ENCODE measurements at regions of chr3 and their contacts with region 1.

Region 1: GRCh38 chr3:36957862-36958686 is 13.2 kb upstream of the TRANK1 start:
- DNase-seq: no peak
- H3K4me3 ChIP-seq: peak overlapping the region; percentile 30
- H3K27ac ChIP-seq: no peak overlapping the region
- H3K4me1 ChIP-seq: peaks cover 14% of the 10 kb centered on the region
- CTCF ChIP-seq: no peak

Region 2: DNA sequence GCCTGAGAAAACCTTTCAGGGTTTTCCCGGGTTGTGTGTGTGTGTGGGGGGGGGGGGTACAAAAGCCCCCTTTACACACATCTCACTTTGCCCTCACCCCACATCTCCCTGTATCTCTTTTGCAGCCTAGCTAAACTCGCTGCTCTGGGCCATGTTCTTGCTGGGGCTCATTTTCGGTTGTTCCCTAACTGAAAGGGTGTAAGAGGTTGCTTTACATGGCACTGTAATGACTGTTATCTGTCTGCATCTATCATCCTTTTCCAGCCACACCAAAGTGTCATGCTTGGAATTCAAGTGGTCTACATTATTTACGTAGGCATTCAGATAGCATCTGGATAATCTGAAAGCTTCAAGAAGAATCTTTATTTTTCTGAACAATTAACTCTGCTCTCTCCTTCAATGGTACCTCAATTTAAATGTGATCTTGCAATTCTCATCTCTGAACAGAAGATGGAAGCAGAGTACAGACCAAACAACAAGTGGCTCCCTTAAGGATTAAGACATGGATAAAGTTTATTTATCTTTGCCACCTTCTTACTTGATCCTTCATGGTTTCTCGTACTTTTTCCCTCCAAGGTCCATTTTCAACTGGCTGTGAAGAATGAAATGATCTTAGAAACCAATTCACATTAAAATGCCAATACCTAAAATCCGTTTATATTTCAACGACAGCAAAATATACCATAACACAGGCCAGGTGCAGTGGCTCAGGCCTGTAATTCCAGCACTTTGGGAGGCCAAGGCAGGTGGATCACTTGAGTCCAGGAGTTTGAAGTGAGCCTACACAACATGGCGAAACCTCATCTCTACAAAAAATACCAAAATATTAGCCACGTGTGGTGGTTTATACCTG is 228.6 kb before region 1 on chr3:
- CTCF ChIA-PET with region 1: no interaction called
- POLR2A ChIA-PET with region 1: no interaction called
- intact Hi-C with region 1: loop called (anchors 2 kb)
- DNase-seq: peak; percentile 55
- H3K4me3 ChIP-seq: no peak overlapping the region
- H3K27ac ChIP-seq: no peak overlapping the region
- H3K4me1 ChIP-seq: no peaks in the 10 kb centered on the region
- CTCF ChIP-seq: peak; percentile 92

Region 3: DNA sequence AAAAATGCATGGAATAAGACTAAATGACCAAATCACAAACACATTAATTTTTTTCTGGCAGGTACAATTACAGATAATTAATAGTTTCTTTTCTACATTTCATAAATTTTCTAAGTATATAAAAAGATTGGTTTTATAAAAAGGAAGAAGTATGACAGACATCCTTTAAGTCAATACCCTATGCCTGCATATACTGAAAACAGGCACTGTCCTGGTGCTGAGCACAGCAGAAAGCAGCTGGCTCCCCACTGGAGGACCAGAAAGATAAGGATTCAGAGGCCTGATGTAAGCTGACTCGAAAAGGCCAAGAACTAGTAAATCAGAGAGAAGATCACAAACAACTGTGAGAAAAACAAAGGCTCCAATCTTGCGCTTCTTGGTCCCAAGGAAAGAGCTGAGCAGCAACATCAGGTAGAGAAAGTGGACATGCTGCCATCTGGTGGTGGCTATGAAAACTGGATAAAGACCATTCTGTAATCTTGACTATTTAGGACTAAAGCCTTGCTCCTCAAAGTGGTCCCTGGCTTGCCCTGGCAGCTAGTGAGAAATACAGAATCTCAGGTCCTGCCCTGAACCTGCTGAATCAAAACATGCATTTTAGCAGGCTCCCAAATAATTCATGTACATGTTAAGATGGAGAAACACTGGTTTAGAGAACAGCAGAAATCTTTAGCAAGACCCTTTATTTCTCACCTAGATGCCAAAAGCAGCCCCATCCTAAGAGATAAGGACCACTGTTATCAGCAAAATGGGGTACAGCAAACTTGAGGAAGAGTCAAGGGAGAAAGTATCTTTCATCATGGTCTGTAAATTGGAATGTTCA is 89.2 kb before region 1 on chr3:
- CTCF ChIA-PET with region 1: interaction called, 6 read pairs
- POLR2A ChIA-PET with region 1: interaction called, 3 read pairs
- intact Hi-C with region 1: loop called (anchors 2 kb)
- DNase-seq: peak; percentile 67
- H3K4me3 ChIP-seq: no peak overlapping the region
- H3K27ac ChIP-seq: no peak overlapping the region
- H3K4me1 ChIP-seq: peaks cover 2% of the 10 kb centered on the region
- CTCF ChIP-seq: peak; percentile 93

Region 4: DNA sequence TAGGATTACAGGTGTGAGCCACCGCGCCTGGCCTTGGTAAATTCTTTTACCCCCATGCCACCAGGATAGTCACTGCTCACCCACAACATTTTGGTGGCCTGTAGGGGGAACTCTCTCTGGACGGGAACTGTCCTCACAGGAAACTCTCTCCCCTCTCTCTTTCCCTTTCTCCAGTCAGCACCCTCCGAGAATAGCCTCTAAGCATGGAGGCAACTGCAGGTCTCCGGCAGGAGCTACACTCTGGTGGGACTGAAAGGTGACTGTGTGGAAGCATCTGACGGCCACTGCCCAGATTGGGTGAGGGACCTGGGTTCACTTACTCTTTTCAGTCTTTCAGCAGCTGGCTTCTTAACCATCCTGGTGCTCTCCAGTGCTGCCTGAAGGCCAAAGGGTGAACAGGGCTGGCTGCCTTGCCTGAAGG is 34.5 kb before region 1 on chr3:
- CTCF ChIA-PET with region 1: no interaction called
- POLR2A ChIA-PET with region 1: interaction called, 4 read pairs
- intact Hi-C with region 1: loop called (anchors 1 kb)
- DNase-seq: peak; percentile 60
- H3K4me3 ChIP-seq: peak overlapping the region; percentile 76
- H3K27ac ChIP-seq: peak overlapping the region; percentile 87
- H3K4me1 ChIP-seq: peaks cover 61% of the 10 kb centered on the region
- CTCF ChIP-seq: peak; percentile 70

Region 5: GRCh38 chr3:36969540-36970432 is 11.7 kb after region 1 on chr3:
- CTCF ChIA-PET with region 1: interaction called, 14 read pairs
- POLR2A ChIA-PET with region 1: interaction called, 11 read pairs
- intact Hi-C with region 1: no loop called
- DNase-seq: peak; percentile 79
- H3K4me3 ChIP-seq: no peak overlapping the region
- H3K27ac ChIP-seq: peak overlapping the region; percentile 33
- H3K4me1 ChIP-seq: peaks cover 40% of the 10 kb centered on the region
- CTCF ChIP-seq: no peak

Region 6: GRCh38 chr3:37330466-37330865 is 372.4 kb after region 1 on chr3:
- CTCF ChIA-PET with region 1: no interaction called
- POLR2A ChIA-PET with region 1: no interaction called
- intact Hi-C with region 1: no loop called
- DNase-seq: no peak
- H3K4me3 ChIP-seq: no peak overlapping the region
- H3K27ac ChIP-seq: no peak overlapping the region
- H3K4me1 ChIP-seq: no peaks in the 10 kb centered on the region
- CTCF ChIP-seq: no peak